ENCODE measurements at regions of chr6 and their contacts with region 1.

Region 1: DNA sequence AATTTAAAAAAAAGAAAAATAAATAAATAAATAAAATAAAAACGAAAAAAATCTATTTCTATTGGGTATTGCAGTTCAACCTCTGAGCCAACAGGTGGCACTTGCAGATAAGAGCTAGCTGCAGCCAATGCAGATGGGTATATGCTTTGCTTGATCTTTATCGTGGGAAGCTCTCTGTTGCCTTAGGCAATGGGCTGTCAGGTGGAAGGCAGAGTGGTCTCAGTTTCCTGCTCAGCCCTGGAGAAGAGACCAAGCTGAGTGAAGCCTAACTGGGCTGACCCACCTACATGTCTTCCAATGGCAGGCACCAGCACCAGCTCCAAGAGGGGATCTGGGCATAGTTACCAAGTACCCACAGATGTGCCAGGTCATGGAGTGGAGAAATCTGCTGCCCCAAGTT is 95.0 kb downstream of the AK9 start:
- DNase-seq: peak; percentile 31
- CTCF ChIP-seq: peak; percentile 45

Region 2: GRCh38 chr6:109580519-109580918 is 15.5 kb before region 1 on chr6:
- CTCF ChIA-PET with region 1: interaction called, 11 read pairs
- POLR2A ChIA-PET with region 1: no interaction called
- DNase-seq: no peak
- CTCF ChIP-seq: no peak

Region 3: DNA sequence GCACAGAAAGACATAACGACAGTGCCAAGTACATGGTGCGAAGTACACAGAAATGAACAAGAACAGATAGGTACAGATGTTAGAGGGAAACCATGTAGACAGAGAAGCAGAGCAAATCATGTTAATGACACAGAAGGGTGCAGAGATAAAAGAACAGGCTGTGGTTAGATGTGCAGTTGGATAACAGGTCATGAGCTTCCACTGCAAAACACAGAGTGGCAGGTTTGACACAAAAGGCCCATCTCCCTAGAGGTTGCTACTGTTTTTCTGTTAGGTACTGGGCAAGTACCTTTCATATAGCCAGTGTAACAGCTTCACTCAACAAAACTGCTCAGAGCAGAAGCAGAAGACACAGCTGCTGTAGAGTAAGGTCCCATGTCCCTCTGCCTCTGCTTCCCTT is 10.4 kb after region 1 on chr6:
- CTCF ChIA-PET with region 1: interaction called, 11 read pairs
- POLR2A ChIA-PET with region 1: no interaction called
- DNase-seq: no peak
- CTCF ChIP-seq: no peak

Measured in GM10248 (cell line).